ENCODE measurements at regions of chr2 and their contacts with region 1.

Region 1: DNA sequence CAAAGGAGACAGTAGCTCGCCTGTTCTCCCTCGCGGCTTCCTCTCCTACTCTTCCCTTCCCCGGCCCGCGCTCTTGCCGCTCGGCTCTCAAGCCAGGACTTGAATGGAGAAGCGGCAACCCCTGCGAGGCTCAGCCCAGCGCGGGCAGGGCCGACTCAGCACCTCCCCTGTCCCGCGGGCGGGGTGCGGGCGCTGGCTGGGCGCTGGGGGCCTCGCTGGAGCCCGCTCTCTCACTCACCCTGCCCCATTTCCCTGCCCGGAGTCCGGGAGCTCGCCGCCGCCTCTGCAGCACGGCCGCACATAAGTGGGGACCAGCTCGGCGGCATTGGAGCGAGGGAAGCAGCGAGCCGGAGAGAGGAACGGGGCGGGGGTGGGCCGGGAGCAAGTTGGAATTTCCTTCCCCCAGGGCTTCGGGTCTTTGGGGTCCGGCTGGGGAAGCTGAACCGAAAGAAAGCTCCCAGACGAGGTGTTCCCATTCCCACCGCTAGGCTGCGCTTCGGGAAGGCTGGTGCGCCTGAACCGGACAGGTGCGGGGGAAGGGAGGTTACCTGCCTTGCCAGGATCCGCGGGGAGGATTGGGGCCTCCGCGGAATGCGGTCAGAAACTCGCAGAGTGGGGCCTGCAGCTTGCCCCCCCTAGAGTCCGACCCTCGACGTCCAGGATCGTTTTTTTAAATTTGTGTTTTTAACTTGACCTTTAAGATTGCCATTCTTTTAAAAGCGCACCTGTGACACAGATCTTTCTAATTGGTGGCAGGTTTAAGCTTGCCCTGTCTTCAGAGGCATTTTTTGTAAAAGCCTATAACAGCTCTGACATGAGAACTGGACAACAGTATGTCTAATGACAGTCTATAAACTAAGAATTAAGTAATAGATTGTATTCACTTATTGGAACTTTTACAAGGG is at the start of gene COBLL1:
- DNase-seq: peak; percentile 65
- ATAC-seq: peak; percentile 65
- H3K4me3 Mint-ChIP-seq: peak within 1 kb of the TSS; percentile 97
- H3K27ac Mint-ChIP-seq: peak within 1 kb of the TSS; percentile 91
- H3K4me1 Mint-ChIP-seq: peaks cover 44% of the 10 kb centered on the region
- H3K27me3 Mint-ChIP-seq: no peaks in the 10 kb centered on the region
- CTCF ChIP-seq: no peak
- total RNA-seq, gene COBLL1: 182 and 222 TPM in 2 replicates

Region 2: DNA sequence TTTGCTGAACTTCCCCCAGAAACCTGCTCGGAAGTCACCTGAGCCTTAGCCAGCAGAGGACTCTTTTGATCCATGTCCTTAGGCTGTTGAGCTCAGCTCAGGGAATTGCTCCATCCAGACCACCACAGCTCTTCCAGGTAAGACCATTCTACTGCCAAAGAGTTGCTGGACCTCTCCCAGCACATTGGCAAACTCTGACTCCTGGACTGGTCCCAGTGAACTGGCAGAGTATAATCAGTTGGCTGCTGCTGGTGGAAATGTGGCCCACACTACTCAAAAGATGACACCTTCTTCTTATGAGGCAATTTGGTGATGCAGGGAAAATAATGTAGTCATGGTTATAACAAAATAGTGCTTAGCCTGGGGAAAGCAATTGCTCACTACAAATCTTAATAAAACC is 797.3 kb before region 1 on chr2:
- CTCF ChIA-PET with region 1: no interaction called
- POLR2A ChIA-PET with region 1: no interaction called
- intact Hi-C with region 1: no loop called
- DNase-seq: no peak
- ATAC-seq: no peak
- H3K4me3 Mint-ChIP-seq: no peak overlapping the region
- H3K27ac Mint-ChIP-seq: no peak overlapping the region
- H3K4me1 Mint-ChIP-seq: no peaks in the 10 kb centered on the region
- H3K27me3 Mint-ChIP-seq: no peaks in the 10 kb centered on the region
- CTCF ChIP-seq: no peak

Region 3: DNA sequence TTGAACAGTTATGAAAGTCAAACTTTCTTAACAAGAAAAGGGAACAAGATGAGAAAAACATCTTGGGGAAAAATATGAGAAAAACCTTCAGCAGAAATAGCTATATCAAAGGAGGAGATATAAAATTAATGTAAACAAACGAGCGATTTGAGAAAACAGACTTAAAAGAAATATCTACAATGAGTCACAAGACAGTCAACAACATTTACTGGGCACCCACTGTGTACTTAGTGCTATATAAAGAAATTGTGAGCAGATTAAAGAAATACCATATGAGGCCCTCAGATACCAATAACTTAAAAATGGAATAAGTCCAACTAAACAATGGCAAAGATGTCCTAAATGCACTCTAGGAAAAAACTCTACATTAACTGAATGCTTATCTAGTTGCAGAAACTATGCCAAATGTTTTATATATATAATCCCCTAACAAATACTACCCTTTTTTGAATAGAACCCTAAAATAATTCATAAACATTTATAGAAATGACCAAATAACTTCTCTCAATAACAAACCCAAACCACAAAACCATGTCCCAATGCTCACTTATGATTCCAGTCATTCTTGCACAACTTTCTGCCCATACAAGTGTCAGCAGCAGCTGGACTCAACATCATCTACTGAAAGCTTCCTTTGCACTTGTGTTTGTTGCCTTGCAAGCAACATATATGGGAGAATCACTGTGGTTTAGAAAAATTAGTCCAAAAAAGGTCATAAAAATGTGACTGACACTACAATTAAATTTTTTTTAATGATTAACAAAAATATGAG is 83.9 kb before region 1 on chr2:
- CTCF ChIA-PET with region 1: interaction called, 12 read pairs
- POLR2A ChIA-PET with region 1: interaction called, 93 read pairs
- intact Hi-C with region 1: loop called (anchors 1 kb)
- DNase-seq: no peak
- ATAC-seq: no peak
- H3K4me3 Mint-ChIP-seq: peak overlapping the region; percentile 73
- H3K27ac Mint-ChIP-seq: peak overlapping the region; percentile 72
- H3K4me1 Mint-ChIP-seq: peaks cover 80% of the 10 kb centered on the region
- H3K27me3 Mint-ChIP-seq: no peaks in the 10 kb centered on the region
- CTCF ChIP-seq: no peak

Region 4: DNA sequence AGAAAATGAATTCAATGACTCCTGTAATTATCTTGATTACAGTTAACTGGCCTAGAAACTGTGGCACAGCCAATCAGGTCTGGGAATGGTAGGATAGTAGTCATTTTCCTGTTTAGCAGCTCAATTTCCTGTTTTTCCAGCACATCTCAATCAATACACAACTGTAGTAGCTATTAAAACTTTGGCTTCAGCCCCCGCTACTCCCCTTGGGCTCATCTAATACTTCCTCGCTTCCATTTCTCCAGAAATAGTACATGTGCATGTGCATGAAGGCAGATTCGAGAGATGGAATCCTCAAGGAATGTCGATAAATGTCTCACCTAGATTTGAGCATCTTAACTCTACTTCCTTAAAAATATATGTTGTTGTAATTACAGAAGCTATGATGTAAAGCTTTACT is 10.1 kb before region 1 on chr2:
- CTCF ChIA-PET with region 1: interaction called, 3 read pairs
- POLR2A ChIA-PET with region 1: interaction called, 14 read pairs
- intact Hi-C with region 1: no loop called
- DNase-seq: no peak
- ATAC-seq: no peak
- H3K4me3 Mint-ChIP-seq: no peak overlapping the region
- H3K27ac Mint-ChIP-seq: no peak overlapping the region
- H3K4me1 Mint-ChIP-seq: peaks cover 43% of the 10 kb centered on the region
- H3K27me3 Mint-ChIP-seq: no peaks in the 10 kb centered on the region
- CTCF ChIP-seq: no peak

Region 5: DNA sequence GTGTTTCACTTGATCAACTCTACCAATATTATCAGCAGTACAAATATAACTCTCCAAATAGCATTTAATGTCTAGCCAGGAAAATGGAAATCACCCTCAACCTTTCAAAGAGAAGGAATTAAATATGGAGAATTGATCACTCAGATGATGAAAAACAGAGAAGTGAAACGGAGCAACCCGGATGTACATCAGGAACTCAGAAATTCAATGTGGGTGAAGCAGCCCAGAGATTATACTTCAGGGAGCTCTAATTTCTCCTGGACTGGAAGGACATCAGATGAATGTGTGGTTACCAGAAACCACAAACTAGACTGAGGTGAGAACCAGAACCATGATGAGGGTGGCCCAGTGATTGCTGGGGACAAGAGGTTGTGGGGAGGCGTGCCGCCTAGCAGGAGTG is 35.2 kb after region 1 on chr2:
- CTCF ChIA-PET with region 1: no interaction called
- POLR2A ChIA-PET with region 1: interaction called, 10 read pairs
- intact Hi-C with region 1: no loop called
- DNase-seq: no peak
- ATAC-seq: peak; percentile 31
- H3K4me3 Mint-ChIP-seq: no peak overlapping the region
- H3K27ac Mint-ChIP-seq: peak overlapping the region; percentile 41
- H3K4me1 Mint-ChIP-seq: peaks cover 11% of the 10 kb centered on the region
- H3K27me3 Mint-ChIP-seq: no peaks in the 10 kb centered on the region
- CTCF ChIP-seq: no peak

Region 6: GRCh38 chr2:164910101-164910899 is 68.3 kb after region 1 on chr2:
- CTCF ChIA-PET with region 1: interaction called, 37 read pairs
- POLR2A ChIA-PET with region 1: interaction called, 20 read pairs
- intact Hi-C with region 1: loop called (anchors 1 kb)
- DNase-seq: no peak
- ATAC-seq: peak; percentile 71
- H3K4me3 Mint-ChIP-seq: peak overlapping the region; percentile 32
- H3K27ac Mint-ChIP-seq: peak overlapping the region; percentile 68
- H3K4me1 Mint-ChIP-seq: peaks cover 39% of the 10 kb centered on the region
- H3K27me3 Mint-ChIP-seq: no peaks in the 10 kb centered on the region
- CTCF ChIP-seq: no peak

Region 7: DNA sequence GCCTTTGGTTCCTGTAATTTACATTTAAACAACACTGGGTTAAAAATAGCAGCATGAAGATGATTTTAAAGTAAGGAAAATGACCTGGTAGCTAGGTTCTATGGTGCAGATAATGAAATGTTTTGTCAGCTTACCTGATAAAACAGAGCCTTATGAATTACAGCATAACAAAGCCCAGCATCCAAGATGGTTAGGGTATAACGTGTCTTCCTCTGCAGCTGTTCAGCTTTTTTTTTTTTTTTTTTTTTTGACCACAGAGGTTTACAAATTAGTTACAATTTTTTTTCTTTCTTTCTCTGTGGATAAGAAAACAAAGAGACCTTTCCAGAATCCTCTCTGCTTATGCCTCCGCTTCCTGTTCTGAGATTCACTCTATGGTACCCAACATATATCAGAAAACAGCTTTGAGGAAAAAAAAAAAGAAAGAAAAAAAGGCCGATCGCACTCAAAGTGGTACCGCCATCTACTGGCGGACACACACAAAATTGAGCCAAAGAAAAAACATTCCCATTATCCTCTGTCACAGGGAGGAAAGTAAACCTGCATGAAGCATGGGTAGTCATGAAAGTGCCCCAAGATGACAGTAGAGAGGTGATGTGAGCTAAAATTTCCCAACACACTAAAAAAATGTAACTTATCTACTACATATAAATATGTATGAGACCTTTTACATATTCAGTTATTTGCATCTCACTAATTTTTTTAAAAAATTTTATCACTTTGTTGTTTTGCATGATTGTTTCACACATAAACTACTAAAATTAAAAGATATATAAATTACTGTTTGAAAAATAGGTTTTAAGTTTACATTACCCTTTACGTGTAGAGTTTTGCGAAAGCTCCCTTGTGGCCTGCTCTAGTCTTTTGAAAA is 362.0 kb after region 1 on chr2 and contains the start of gene SCN3A:
- CTCF ChIA-PET with region 1: no interaction called
- POLR2A ChIA-PET with region 1: no interaction called
- intact Hi-C with region 1: loop called (anchors 5 kb)
- DNase-seq: no peak
- ATAC-seq: peak; percentile 57
- H3K4me3 Mint-ChIP-seq: peak within 1 kb of the TSS; percentile 80
- H3K27ac Mint-ChIP-seq: peak within 1 kb of the TSS; percentile 73
- H3K4me1 Mint-ChIP-seq: peaks cover 29% of the 10 kb centered on the region
- H3K27me3 Mint-ChIP-seq: no peaks in the 10 kb centered on the region
- CTCF ChIP-seq: no peak
- total RNA-seq, gene SCN3A: 2.2 and 2.6 TPM in 2 replicates

Measured in activated B cell treated with CpG ODN at 0.5 μM for 24 hours (primary cell).